ENCODE measurements at regions of chr1 and their contacts with region 1.

Region 1: DNA sequence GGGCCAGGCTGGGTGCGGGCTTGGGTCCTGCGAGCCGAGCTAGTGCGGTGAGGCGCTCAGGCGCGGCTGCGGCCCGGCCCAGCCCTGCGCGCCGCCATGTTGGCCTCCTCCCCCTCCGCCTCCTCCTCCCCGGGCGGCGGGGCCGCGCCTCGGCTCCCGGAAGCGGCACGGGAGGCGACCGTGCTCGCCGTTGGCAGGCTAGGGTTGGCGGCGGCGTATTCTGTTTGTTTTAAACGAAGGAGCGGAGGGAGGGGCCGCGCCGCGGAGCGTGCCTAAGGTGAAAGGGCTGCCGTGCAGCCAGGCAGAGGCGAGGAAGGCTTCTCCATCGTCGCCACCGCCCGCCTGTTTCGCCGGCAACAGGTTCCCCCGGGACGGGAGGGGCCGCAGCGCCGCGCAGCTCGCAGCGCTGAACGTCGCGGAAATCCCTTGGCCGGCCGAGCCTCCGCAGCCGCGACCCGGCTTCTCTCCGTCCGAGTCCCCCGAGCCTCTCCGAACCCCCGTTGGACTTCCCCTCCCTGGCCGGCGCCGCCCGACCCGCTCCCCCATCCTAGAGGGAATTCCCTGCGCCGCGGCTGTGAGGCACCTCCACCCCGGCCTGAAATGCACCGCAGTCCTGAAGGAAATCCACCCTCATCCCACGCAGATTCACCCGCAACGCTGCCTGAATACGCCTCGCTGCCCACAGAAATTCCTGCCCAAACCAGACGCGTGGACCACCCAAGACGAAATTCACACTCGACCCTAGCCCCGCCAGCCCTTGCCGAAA is at the start of gene USP24:
- DNase-seq: no peak
- ATAC-seq: peak; percentile 86
- H3K4me3 ChIP-seq: peak within 1 kb of the TSS; percentile 89
- H3K27ac ChIP-seq: peak within 1 kb of the TSS; percentile 87
- H3K4me1 ChIP-seq: peaks cover 7% of the 10 kb centered on the region
- H3K27me3 ChIP-seq: no peaks in the 10 kb centered on the region
- CTCF ChIP-seq: no peak
- EP300 ChIP-seq: no peak
- POLR2A ChIP-seq: peak; percentile 95
- RAD21 ChIP-seq: no peak
- polyA plus RNA-seq, gene USP24: 4.6 to 6.4 TPM

Region 2: DNA sequence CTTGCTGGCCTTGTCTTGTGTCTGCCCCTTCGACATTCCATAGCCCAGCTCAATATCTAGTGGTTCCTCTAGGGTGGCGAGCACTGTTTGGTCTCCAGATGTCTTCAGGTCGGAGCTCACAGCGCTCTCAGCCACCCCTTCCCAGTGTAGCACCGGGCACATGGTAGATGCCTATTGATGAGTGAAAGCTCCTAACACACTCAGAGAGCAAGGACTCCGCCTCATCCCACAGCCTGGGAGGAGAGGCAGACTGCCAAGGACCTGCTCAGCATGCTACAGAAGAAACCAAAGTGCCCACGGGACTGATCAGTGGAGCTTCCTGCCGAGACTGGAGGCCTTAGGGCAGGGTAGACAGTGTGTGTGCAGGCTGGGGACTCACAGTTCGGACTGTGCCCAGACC is 165.2 kb before region 1 on chr1:
- CTCF ChIA-PET with region 1: no interaction called
- POLR2A ChIA-PET with region 1: no interaction called
- RAD21 ChIA-PET with region 1: no interaction called
- SMC1A ChIA-PET with region 1: no interaction called
- in situ Hi-C with region 1: no loop called
- intact Hi-C with region 1: no loop called
- DNase-seq: no peak
- ATAC-seq: no peak
- H3K4me3 ChIP-seq: no peak overlapping the region
- H3K27ac ChIP-seq: no peak overlapping the region
- H3K4me1 ChIP-seq: no peaks in the 10 kb centered on the region
- H3K27me3 ChIP-seq: peaks cover 5 to 7% of the 10 kb centered on the region in 2 experiments; a peak in 3 of 4 replicates
- CTCF ChIP-seq: no peak
- EP300 ChIP-seq: no peak
- POLR2A ChIP-seq: no peak
- RAD21 ChIP-seq: no peak

Region 3: DNA sequence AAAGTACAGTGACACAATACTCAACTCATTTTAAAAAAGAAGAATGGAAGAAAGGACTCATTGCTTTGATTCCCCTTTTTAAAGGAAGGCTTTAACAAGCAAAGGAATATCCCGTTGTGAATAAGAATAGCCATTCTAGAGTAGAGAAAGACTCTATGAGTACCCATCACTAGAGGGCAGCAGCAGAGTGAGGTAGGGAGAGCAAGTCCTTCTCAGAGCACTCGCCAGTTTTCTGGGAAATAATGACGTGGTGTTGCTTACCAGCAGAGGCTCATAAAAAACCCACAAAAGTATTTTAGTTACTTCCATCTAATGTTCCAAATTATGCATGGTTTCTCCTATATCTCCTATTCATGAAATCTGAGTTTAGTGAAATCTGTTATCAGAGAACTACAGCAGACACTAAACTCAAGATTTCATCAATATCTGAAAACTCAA is 74.9 kb before region 1 on chr1:
- CTCF ChIA-PET with region 1: interaction called, 4 read pairs
- POLR2A ChIA-PET with region 1: no interaction called
- RAD21 ChIA-PET with region 1: interaction called, 5 read pairs
- SMC1A ChIA-PET with region 1: interaction called, 8 read pairs
- in situ Hi-C with region 1: no loop called
- intact Hi-C with region 1: loop called (anchors 1 kb)
- DNase-seq: peak; percentile 11
- ATAC-seq: peak; percentile 97
- H3K4me3 ChIP-seq: no peak overlapping the region
- H3K27ac ChIP-seq: no peak overlapping the region
- H3K4me1 ChIP-seq: no peaks in the 10 kb centered on the region
- H3K27me3 ChIP-seq: no peaks in the 10 kb centered on the region
- CTCF ChIP-seq: peak; percentile 70 to 84 (median 75)
- EP300 ChIP-seq: no peak
- POLR2A ChIP-seq: no peak
- RAD21 ChIP-seq: peak; percentile 94

Region 4: DNA sequence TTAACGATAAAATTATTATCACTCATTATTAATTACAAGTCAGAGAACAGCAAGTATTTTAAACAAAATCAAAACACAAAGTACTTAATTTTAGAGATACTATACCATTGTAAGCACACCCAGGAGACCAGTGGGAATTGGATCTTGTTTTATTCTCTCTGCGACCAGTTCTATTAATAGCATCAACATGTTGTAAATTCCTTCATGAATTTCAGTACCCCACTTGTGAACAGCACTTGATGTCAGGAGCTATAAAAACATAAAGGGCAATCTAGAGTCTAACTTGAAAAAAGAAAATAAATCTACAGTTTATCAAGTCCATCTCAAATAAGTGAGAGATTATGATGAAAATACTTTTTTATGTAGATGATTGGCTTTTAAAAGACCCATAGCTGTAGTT is 43.2 kb before region 1 on chr1:
- CTCF ChIA-PET with region 1: no interaction called
- POLR2A ChIA-PET with region 1: interaction called, 3 read pairs
- RAD21 ChIA-PET with region 1: interaction called, 8 read pairs
- SMC1A ChIA-PET with region 1: interaction called, 12 read pairs
- in situ Hi-C with region 1: no loop called
- intact Hi-C with region 1: no loop called
- DNase-seq: no peak
- ATAC-seq: no peak
- H3K4me3 ChIP-seq: no peak overlapping the region
- H3K27ac ChIP-seq: no peak overlapping the region
- H3K4me1 ChIP-seq: no peaks in the 10 kb centered on the region
- H3K27me3 ChIP-seq: no peaks in the 10 kb centered on the region
- CTCF ChIP-seq: no peak
- EP300 ChIP-seq: no peak
- POLR2A ChIP-seq: no peak
- RAD21 ChIP-seq: no peak

Region 5: GRCh38 chr1:55195521-55196233 is 19.8 kb before region 1 on chr1:
- CTCF ChIA-PET with region 1: interaction called, 9 read pairs
- POLR2A ChIA-PET with region 1: interaction called, 3 read pairs
- RAD21 ChIA-PET with region 1: interaction called, 12 read pairs
- SMC1A ChIA-PET with region 1: interaction called, 17 read pairs
- in situ Hi-C with region 1: no loop called
- intact Hi-C with region 1: no loop called
- DNase-seq: no peak
- ATAC-seq: peak; percentile 81
- H3K4me3 ChIP-seq: no peak overlapping the region
- H3K27ac ChIP-seq: no peak overlapping the region
- H3K4me1 ChIP-seq: peaks cover 5% of the 10 kb centered on the region; the same call in 1 of the 2 replicates
- H3K27me3 ChIP-seq: no peaks in the 10 kb centered on the region
- CTCF ChIP-seq: no peak
- EP300 ChIP-seq: no peak
- POLR2A ChIP-seq: no peak
- RAD21 ChIP-seq: no peak

Region 6: GRCh38 chr1:55204997-55205396 is 10.4 kb before region 1 on chr1:
- CTCF ChIA-PET with region 1: interaction called, 9 read pairs
- POLR2A ChIA-PET with region 1: interaction called, 16 read pairs
- RAD21 ChIA-PET with region 1: interaction called, 12 read pairs
- SMC1A ChIA-PET with region 1: interaction called, 9 read pairs
- in situ Hi-C with region 1: no loop called
- intact Hi-C with region 1: no loop called
- DNase-seq: no peak
- ATAC-seq: peak; percentile 85
- H3K4me3 ChIP-seq: no peak overlapping the region
- H3K27ac ChIP-seq: 0 out of 2 replicates have a peak overlapping the region, but pooled peaks have one; percentile 26
- H3K4me1 ChIP-seq: peaks cover 24% of the 10 kb centered on the region
- H3K27me3 ChIP-seq: no peaks in the 10 kb centered on the region
- CTCF ChIP-seq: no peak
- EP300 ChIP-seq: no peak
- POLR2A ChIP-seq: no peak
- RAD21 ChIP-seq: no peak

Region 7: GRCh38 chr1:55239548-55239947 is 24.1 kb after region 1 on chr1:
- CTCF ChIA-PET with region 1: no interaction called
- POLR2A ChIA-PET with region 1: no interaction called
- RAD21 ChIA-PET with region 1: no interaction called
- SMC1A ChIA-PET with region 1: no interaction called
- in situ Hi-C with region 1: no loop called
- intact Hi-C with region 1: no loop called
- DNase-seq: no peak
- ATAC-seq: no peak
- H3K4me3 ChIP-seq: no peak overlapping the region
- H3K27ac ChIP-seq: no peak overlapping the region
- H3K4me1 ChIP-seq: no peaks in the 10 kb centered on the region
- H3K27me3 ChIP-seq: peaks cover 0 to 3% of the 10 kb centered on the region in 2 experiments; a peak in 2 of 4 replicates
- CTCF ChIP-seq: no peak
- EP300 ChIP-seq: no peak
- POLR2A ChIP-seq: no peak
- RAD21 ChIP-seq: no peak

Region 8: DNA sequence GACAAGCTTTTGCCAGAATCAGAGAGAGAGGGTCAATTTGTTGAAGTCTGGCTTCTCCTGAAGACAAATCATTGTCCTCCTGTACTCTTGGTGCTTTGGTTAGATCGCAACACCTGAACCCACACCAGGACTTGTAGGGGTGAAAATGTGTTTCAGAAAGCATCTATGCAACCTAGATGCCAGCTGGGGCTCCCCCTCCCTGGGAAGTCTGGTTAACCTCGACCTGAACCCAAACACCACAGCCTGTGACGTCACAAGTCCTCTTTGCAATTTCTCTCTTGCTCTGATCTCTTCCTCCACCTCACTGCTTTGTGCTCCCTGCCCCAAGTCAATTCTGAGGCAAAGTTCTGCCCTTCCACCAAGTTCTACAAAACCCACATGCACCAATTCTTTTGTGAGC is 42.5 kb after region 1 on chr1:
- CTCF ChIA-PET with region 1: interaction called, 7 read pairs
- POLR2A ChIA-PET with region 1: interaction called, 8 read pairs
- RAD21 ChIA-PET with region 1: interaction called, 12 read pairs
- SMC1A ChIA-PET with region 1: interaction called, 10 read pairs
- in situ Hi-C with region 1: no loop called
- intact Hi-C with region 1: loop called (anchors 5 kb)
- DNase-seq: peak; percentile 45
- ATAC-seq: peak; percentile 63
- H3K4me3 ChIP-seq: no peak overlapping the region
- H3K27ac ChIP-seq: peak overlapping the region; percentile 55
- H3K4me1 ChIP-seq: peaks cover 51% of the 10 kb centered on the region
- H3K27me3 ChIP-seq: no peaks in the 10 kb centered on the region
- CTCF ChIP-seq: no peak
- EP300 ChIP-seq: no peak
- POLR2A ChIP-seq: no peak
- RAD21 ChIP-seq: no peak

Region 9: GRCh38 chr1:56570924-56571372 is 1355.5 kb after region 1 on chr1:
- CTCF ChIA-PET with region 1: no interaction called
- POLR2A ChIA-PET with region 1: interaction called, 4 read pairs
- RAD21 ChIA-PET with region 1: interaction called, 3 read pairs
- SMC1A ChIA-PET with region 1: no interaction called
- in situ Hi-C with region 1: no loop called
- intact Hi-C with region 1: loop called (anchors 10 kb)
- DNase-seq: no peak
- ATAC-seq: peak; percentile 33
- H3K4me3 ChIP-seq: no peak overlapping the region
- H3K27ac ChIP-seq: no peak overlapping the region
- H3K4me1 ChIP-seq: no peaks in the 10 kb centered on the region
- H3K27me3 ChIP-seq: peaks cover 0 to 3% of the 10 kb centered on the region in 2 experiments; a peak in 1 of 4 replicates
- CTCF ChIP-seq: no peak
- EP300 ChIP-seq: no peak
- POLR2A ChIP-seq: no peak
- RAD21 ChIP-seq: no peak

Measured in GM12878 (cell line).